Posterior vena cava (tissue), 2 donors: ENCODE measurements at regions of chr1 and their contacts with region 1.

Region 1: DNA sequence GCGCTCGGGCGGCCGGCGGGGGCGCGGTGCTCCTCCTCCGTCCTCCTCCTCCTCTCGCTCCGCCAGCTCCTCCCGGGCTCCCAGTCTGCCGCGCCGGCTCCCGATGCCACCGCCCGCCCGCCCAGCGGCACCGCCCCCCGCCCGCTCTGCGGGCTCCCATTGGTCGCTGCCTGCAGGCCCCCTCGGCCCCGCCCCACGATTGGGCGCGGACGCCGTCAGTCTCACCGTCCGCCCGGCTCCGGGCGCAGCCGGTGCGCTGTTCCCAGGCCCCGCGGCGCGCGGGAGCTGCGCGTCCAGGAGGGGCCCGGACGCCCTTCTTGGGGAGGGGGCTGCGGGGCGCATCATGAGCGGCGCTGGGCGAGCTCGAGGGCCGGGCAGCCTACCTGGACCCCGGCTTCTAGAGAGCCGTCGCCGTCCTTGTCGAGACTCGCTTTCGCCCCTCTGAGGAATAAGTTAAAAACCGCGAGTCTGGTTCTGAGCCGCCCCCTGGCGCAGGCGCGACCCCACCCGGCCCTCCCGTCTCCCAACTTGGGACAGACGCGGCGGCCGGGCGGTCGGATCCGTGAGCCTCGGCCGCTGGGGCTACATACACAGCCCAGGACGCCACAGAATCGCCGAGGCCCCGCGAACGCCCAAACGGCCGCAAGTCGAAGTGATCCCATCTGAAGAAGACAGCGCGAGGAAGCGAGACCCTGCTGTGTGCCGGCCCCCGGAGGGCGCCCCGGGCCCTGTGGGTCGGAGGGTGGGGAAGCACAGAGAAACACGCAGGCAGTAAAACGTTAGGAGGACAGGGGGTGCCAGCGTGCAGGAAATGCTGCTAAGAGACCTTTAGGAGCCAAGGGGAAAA is at the start of gene SIPA1L2:
- DNase-seq: peak; percentile 98
- total RNA-seq, gene SIPA1L2: 14.1 to 14.9 TPM

Region 2: GRCh38 chr1:231866392-231867331 is 763.6 kb before region 1 on chr1:
- intact Hi-C with region 1: loop called in 1 of 2 experiments (anchors 10 kb)
- DNase-seq: peak; percentile 85

Region 3: DNA sequence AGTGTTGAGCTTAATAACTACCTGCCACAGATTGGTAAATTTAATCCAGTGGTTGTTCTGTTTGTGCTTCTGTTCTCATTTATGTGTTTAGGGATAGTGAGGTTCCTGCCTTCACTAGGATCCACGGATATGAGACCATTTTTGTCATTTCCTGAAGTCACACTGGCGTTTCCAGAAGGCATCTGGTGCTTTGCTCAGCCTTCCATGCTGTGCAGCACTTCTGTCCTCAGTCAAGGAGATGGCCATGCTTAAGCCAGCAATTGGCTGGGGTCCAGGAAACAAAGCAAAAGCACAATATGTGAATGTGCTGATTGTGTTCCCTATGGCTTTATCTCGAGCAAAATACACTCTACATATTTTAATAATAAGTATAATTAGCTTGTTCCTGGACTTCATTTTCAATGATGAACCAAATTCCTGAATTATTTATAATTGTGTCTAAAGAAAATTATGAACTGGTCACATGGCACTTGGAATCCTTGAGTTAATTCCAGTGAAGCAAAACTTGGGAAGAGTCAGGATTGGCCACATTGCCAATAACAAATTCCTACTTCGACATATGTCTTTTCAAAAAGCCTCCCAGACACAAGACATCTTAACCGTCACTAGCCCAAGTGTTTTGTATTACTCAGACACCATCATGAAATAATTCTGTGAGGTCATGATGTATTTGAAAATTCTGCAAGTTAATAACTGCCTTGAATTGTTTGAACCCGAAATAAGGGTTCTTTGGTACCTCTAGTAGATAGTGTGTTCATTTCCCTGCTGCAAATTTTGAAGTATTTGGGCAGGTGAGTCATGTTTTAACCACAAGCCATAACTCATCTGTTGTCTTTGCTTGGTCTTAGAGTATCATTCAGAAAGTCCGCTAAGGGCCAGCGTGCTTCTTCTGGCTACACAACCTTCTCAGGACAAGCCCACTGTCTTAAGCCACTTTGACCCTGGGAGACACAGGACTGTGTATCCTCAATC is 591.3 kb before region 1 on chr1:
- intact Hi-C with region 1: no loop called
- DNase-seq: no peak

Region 4: GRCh38 chr1:232578651-232579195 is 51.5 kb before region 1 on chr1:
- intact Hi-C with region 1: no loop called
- DNase-seq: no peak

Region 5: DNA sequence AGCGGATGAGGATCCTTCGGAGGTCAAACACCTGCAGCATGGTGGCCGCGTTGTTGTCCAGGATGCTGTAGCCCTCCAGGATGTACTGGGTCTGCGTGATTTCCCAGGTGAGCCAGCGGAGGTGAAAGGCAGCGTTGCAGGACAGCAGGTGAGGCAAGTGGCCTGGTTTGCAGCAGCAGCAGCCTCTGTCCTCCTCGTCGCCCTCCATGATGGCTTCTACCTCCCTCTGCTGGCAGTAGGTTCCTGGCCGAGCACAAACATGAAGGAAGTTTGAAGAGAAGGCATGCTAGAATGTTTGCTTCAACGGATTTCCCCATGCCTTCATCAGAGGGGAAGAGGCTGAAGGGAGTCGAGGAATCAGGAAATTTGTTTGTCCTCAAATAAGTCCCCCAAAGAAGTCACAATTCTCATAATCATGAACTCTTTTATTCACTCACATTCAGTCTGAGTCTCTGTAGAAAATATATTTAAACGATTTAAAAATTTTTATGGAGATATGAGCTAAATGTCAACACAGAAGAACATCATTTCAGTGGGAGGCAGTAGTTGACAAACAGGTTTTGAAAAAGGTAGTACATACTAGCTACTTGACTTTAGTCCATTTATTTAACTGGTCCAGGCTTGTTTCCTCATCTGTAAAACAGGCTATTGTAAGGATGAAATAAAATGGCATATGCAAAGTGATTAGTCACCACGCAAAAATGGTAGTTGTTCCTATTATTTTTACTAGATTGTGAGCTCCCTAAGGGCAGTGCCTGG is 395.1 kb after region 1 on chr1:
- intact Hi-C with region 1: loop called in 1 of 2 experiments (anchors 10 kb)
- DNase-seq: no peak

Region 6: GRCh38 chr1:233261206-233261605 is 630.9 kb after region 1 on chr1:
- intact Hi-C with region 1: no loop called
- DNase-seq: no peak